ENCODE measurements at regions of chrX and their contacts with region 1.

Region 1: DNA sequence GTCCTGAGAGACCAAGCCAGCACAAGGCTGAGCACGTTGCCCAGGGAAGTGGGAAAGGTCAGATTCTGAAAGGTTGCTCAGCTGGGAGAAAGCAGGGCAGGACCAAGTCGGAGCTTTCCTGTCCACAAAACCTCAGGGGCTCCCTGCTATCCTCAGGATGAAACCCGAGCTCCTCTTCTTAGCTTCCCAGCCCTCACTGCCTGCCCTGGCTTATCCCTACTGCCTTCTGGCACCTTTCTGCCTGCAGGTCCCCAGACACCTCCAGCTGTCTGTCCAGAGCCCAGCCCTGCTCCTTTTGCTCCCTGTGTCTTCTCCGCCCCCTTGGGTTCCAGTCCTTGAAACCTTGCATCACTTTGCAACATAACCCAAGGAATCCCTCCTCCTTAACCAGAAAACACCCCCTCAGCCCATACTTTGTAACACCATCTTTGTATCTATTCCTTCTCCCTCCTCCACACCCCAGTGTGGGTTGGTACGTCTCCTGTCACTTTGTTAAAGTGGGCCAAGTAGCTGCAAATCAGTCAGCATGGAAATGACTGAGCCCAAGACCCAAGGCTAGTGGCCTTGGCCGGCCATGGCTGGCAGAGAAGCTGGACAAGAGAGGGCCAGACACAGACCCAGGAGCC is 20.0 kb upstream of the PRRG3 start:
- DNase-seq: no peak
- ATAC-seq: no peak
- H3K4me3 ChIP-seq: no peak overlapping the region
- H3K27ac ChIP-seq: no peak overlapping the region
- H3K4me1 ChIP-seq: no peaks in the 10 kb centered on the region
- H3K27me3 ChIP-seq: peaks cover 0 to 2% (median 0%) of the 10 kb centered on the region in 7 donors
- CTCF ChIP-seq: no peak

Region 2: GRCh38 chrX:151516538-151517187 is 158.6 kb before region 1 on chrX:
- intact Hi-C with region 1: loop called in 1 of 10 experiments (anchors 10 kb)
- DNase-seq: no peak
- ATAC-seq: peak in 1 of 8 donors; percentile 12
- H3K4me3 ChIP-seq: no peak overlapping the region
- H3K27ac ChIP-seq: no peak overlapping the region
- H3K4me1 ChIP-seq: no peaks in the 10 kb centered on the region
- H3K27me3 ChIP-seq: peaks cover 0 to 11% (median 0%) of the 10 kb centered on the region in 7 donors
- CTCF ChIP-seq: no peak